ENCODE measurements at regions of chr11 and their contacts with region 1.

Region 1: GRCh38 chr11:65382033-65382807 is at the start of gene SLC25A45:
- DNase-seq: peak; percentile 85
- ATAC-seq: peak; percentile 93
- H3K4me3 ChIP-seq: peak within 1 kb of the TSS; percentile 36 to 51
- H3K27ac ChIP-seq: peak within 1 kb of the TSS; percentile 92
- H3K4me1 ChIP-seq: peaks cover 39% of the 10 kb centered on the region
- H3K27me3 ChIP-seq: no peaks in the 10 kb centered on the region
- CTCF ChIP-seq: peak; percentile 90; the same call in 1 of the 2 replicates
- total RNA-seq, gene SLC25A45: 9.8 TPM

Region 2: GRCh38 chr11:65352783-65353182 is 29.4 kb before region 1 on chr11:
- CTCF ChIA-PET with region 1: no interaction called
- POLR2A ChIA-PET with region 1: interaction called, 10 read pairs
- in situ Hi-C with region 1: no loop called
- intact Hi-C with region 1: no loop called
- DNase-seq: no peak
- ATAC-seq: no peak
- H3K4me3 ChIP-seq: no peak overlapping the region
- H3K27ac ChIP-seq: no peak overlapping the region
- H3K4me1 ChIP-seq: peaks cover 5% of the 10 kb centered on the region; the same call in 1 of the 2 replicates
- H3K27me3 ChIP-seq: no peaks in the 10 kb centered on the region
- CTCF ChIP-seq: no peak

Region 3: DNA sequence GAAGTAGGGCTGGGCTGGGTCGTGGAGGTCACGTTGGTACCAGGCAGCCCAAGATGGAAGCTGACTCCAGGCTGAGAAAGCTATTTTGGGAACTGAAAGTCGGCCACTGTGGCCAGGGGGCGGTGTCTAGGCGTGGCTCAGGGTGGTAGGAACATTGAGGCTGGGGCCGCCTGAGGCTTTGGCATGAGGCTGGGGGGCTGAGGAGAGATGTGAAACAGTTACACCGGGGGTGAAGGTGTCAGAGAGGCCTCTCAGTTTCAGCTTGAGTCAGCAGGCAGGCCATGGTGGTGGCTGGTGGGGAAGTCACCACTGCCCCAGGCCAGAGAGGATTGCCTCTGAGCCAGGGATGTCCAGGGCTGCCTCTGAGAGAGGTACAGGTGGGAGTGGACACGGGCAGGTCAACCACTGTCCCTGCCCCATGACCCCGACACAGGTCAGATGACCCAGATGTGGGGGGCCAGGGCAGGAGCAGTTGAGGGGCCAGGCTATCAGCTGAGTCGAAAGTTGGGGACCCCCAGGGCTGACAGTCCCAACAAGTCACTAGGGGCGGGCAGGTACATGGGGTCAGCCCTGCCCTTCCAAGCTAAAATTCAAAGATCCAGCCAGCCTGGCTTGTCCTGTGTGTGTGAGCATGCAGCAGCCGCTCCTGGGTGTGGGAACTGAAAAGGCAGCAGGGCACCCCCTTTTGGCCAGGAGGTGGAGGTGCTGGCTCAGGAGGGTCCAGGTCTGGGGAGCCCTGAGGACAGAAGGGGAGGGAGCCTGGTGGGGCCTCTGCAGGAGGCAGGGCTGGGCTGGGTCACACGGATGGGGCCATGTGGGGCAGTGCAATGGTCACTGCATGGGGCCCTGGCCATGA is 206.2 kb after region 1 on chr11:
- CTCF ChIA-PET with region 1: interaction called, 10 read pairs
- POLR2A ChIA-PET with region 1: no interaction called
- in situ Hi-C with region 1: no loop called
- intact Hi-C with region 1: no loop called
- DNase-seq: no peak
- ATAC-seq: peak; percentile 86
- H3K4me3 ChIP-seq: no peak overlapping the region
- H3K27ac ChIP-seq: peak overlapping the region; percentile 36
- H3K4me1 ChIP-seq: peaks cover 17% of the 10 kb centered on the region
- H3K27me3 ChIP-seq: no peaks in the 10 kb centered on the region
- CTCF ChIP-seq: no peak; the same call in 1 of the 2 replicates